ENCODE measurements at regions of chr11 and their contacts with region 1.

Region 1: DNA sequence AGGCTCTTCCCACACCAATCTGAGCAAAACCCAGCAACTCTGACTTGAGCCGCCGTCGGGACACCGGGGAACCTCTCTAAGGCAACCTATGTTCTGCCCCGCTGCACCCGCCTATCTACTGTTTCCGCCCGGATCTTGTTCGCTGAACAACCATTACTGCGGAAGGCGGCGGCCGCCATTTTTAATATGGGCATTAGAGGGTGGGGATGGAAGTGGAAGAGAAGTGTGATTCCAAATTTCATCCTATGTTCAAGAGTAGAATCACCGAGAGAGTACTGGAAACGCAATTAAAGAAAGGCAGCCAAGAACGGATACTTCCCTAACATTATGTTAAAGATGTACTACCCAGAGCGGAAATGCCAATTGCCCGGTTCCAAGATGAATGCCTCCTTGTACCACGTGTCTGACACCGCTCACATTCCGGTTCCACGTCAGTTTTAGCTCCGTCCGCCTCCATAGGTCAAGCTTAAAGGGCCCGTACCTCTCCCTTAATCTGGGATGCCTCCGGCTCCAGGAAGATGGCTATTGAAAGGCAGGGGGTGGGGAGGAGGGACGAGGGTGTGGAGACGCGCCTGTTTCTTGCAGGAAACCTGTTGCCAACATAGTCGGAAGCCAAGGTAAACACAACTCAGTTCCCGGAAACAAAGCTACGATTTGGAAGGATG is at the start of gene DPAGT1:
- DNase-seq: peak; percentile 82
- H3K4me3 Mint-ChIP-seq: peak within 1 kb of the TSS; percentile 91
- H3K27ac Mint-ChIP-seq: peak within 1 kb of the TSS; percentile 95
- H3K4me1 Mint-ChIP-seq: peaks cover 44% of the 10 kb centered on the region
- H3K27me3 Mint-ChIP-seq: no peaks in the 10 kb centered on the region
- total RNA-seq, gene DPAGT1: 81.8 and 84.4 TPM in 2 replicates

Region 2: DNA sequence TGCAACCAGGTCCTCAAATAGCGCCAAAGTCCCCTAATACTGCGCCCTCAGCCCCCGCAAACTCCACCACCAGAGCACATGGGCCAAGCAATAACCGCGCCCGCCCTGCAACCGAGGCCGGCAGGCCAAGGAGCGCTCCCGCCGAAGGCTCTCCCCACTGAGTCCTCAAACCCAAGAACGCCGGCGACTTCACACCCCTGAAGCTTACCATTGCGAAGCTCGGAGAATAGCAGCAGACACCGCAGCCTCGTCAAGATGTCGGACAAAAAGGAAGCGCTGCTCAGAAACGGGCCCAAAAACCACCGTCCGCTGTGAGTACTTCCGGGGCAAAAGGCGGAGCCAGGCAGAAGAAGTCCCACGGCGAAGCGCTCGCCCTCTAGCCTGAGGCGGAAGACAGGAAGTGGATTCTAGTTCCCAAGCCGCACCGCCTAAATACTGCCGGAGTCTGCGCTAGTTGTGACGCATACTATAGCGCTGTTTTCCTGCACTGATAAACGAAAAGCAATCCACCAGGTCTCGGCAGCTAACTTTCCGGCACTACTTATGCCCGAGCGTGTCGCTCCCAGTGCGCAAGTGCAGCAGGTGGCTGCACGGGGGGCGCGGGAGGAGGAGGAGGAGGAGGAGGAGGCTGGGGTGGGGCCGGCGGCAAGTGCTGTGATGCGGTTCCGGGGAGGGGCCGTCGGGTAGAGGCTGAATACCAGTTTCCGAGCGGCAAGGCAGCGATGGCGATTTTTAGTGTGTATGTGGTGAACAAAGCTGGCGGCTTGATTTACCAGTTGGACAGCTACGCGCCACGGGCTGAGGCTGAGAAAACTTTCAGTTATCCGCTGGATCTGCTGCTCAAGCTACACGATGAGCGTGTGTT is 83.6 kb before region 1 on chr11 and contains the starts of genes RPS25 and TRAPPC4:
- intact Hi-C with region 1: loop called (anchors 1 kb)
- DNase-seq: peak; percentile 92
- H3K4me3 Mint-ChIP-seq: peak within 1 kb of the TSS; percentile 99
- H3K27ac Mint-ChIP-seq: peak within 1 kb of the TSS; percentile 100
- H3K4me1 Mint-ChIP-seq: peaks cover 42% of the 10 kb centered on the region
- H3K27me3 Mint-ChIP-seq: no peaks in the 10 kb centered on the region
- total RNA-seq, gene RPS25: 1,440 and 1,455 TPM in 2 replicates
- total RNA-seq, gene TRAPPC4: 141 and 142 TPM in 2 replicates

Region 3: DNA sequence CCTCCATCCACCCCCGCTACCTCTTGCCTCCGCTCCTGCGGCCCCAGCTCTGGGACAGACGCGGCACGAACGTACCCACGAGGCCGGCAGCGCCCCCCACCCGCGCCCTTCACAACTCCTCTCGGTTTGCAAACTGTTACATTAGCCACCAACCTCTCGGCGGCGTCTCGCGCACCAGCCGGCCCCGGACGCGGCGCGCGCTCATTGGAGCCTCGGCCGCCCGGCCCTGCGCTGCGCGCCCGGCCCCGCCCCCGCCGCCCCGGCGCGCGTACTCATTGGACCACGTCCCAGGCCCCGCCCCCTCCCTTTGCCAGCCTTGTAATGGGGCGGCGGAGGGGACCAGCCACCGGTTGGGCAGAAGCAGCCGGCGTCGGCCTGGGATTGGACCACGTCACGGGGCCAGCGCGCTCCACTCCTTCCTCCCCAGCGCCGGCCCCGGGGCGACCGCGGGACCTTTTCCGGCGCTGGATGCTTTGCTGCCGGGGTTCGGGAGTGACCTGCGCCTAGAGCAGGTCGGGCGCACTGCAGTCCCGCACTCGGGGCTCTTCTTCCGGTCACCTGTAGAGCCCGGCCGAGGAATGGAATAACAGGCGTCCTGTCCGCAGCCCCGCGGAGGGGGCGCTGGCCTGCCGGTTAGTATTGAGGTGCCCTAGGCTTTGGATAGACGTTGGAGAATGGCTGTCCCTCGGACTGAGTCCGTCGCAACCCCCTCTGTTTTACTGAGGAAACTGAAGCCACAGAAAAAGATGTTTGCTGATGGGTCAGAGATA is 44.7 kb before region 1 on chr11 and contains the start of gene HYOU1:
- intact Hi-C with region 1: loop called (anchors 1 kb)
- DNase-seq: peak; percentile 98
- H3K4me3 Mint-ChIP-seq: peak within 1 kb of the TSS; percentile 97
- H3K27ac Mint-ChIP-seq: peak within 1 kb of the TSS; percentile 99
- H3K4me1 Mint-ChIP-seq: peaks cover 48% of the 10 kb centered on the region
- H3K27me3 Mint-ChIP-seq: no peaks in the 10 kb centered on the region
- total RNA-seq, gene HYOU1: 216 and 219 TPM in 2 replicates

Region 4: DNA sequence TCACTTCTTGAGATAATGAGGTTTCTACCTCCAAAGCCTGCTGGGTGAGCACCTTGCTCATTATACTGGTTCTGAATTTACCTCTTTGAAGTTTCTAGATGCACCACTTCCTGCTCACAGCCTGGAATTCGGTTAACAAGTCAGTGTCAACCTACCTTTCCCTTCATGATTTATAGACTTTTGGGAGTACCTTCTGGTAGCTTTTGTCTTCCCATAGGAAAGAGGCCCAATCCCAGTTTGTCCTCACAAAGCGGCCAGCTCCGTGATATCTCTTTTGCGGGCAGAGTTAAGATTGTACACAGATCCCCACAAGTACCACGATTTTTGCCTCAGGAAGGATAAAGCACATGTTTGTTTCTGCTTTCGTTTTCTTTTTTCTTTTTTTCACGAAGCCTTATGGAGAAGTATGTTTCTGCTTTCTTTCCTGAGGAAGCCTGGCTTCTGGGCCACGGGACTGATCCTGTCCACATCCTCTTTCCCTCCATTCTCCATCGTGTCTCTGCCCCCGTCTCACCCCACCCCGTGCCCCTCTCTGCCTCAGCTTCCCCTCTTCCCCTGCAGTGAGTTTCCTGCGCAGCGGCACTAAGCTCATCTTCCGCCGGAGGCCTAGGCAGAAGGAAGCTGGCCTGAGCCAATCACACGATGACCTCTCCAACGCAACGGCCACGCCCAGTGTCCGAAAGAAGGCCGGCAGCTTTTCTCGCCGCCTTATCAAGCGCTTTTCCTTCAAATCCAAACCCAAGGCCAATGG is 13.8 kb after region 1 on chr11:
- intact Hi-C with region 1: loop called (anchors 1 kb)
- DNase-seq: no peak
- H3K4me3 Mint-ChIP-seq: peak overlapping the region; percentile 78
- H3K27ac Mint-ChIP-seq: peak overlapping the region; percentile 93
- H3K4me1 Mint-ChIP-seq: peaks cover 25% of the 10 kb centered on the region
- H3K27me3 Mint-ChIP-seq: no peaks in the 10 kb centered on the region

Region 5: DNA sequence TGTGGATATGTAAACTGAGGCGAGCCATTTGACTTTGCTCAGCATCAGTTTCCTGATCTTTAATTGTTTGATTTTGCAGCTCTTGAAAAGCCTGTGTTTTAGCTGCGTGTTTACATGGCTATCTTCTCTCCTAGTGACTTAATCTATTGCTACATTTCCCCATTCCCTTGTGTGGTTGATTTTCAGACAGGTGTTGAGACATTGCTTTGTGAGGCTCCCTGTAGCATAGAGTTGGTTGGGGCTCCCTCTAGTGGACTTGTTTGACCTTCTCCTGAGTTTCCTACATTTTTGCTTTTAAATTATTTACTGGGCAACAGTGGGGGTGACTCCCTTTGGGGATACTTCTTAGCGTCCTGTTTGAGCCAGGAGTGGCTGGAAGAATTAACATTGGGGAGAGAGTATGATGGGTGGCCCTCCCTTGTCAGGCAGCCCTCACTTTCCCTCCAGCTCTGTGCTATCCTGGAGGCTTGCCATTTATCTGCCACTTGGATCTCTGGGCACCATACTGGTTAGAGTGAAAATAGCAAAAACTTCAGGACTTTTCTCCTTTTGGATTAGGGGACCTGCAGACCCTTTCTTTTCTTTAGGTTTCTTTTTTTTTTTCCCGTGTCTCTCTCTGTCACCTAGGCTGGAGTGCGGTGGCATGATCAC is 95.1 kb after region 1 on chr11:
- intact Hi-C with region 1: loop called (anchors 1 kb)
- DNase-seq: peak; percentile 60
- H3K4me3 Mint-ChIP-seq: no peak overlapping the region
- H3K27ac Mint-ChIP-seq: no peak overlapping the region
- H3K4me1 Mint-ChIP-seq: peaks cover 9% of the 10 kb centered on the region
- H3K27me3 Mint-ChIP-seq: peaks cover 3% of the 10 kb centered on the region

Measured in activated T-helper 1 cell treated with anti-CD3 and anti-CD28 coated beads, Interleukin-12 subunit alpha, Interleukin-12 subunit beta, Interleukin-2, Interleukin-4 antibody, amounts not matched to agents 30 ng/mL and 10 ng/mL and 1 ng/mL, durations not matched to agents 14 hours and 24 hours and 36 hours (primary cell).